Upper lobe of right lung (tissue), 1 donor: ENCODE measurements at regions of chr7 and their contacts with region 1.

Region 1: DNA sequence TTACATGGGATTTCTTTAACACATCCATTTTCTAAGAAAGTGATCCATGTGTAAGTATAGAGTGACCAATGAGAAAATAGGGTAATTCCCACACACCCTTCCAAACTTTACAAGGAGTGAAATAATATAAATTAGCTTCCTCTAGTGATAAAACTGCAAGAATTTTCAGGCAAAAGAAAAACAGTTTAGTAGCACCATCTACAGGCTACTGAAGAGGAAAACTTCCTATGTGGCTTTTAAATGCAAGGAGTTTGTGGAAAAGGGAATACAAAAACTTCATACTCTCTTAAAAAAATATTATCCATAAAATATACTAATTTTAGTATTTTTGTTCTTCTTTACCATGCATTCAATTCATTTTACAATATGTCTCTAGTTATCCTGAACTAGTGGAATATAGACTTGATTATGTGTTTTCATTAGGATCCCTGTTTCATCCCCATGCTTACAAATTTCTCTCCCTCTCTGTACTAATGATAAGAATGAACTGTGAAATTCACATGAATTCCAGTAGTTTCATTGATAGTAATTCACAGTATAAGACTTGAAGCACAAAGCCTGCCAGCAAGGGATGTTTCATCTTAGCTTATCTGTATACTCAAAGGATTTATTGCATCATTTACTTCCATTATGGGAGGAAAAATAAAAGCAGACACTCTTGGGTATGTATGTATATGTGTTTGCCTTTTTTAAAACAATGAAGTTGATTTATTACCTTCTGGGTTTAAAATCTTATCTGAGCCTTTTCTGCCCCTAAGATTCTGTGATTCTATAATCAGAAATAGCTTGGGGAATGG is 442.9 kb downstream of the AUTS2 start:
- DNase-seq: no peak
- ATAC-seq: no peak
- H3K4me3 ChIP-seq: no peak overlapping the region
- H3K27ac ChIP-seq: no peak overlapping the region
- H3K4me1 ChIP-seq: no peaks in the 10 kb centered on the region
- H3K27me3 ChIP-seq: no peaks in the 10 kb centered on the region
- CTCF ChIP-seq: peak; percentile 52

Region 2: DNA sequence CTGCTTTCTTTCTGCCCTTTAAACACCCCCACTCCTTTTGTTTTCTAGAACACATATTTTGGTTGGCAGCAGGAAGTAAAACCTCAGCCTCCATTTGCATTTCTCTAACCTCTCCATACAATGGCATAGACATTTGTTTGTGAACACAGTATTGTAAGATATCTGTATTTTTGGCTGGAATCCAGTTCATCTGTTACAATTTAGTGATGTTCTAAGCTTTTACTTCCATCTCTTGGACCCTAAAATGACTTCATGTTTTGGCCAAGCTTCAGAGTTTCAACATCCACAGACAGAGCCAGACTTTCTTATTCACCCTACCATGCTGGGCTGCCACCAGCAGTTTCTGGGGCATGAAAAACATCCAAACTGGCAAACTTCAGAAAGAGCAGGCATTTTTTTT is 463.9 kb before region 1 on chr7:
- intact Hi-C with region 1: no loop called
- DNase-seq: no peak
- ATAC-seq: no peak
- H3K4me3 ChIP-seq: no peak overlapping the region
- H3K27ac ChIP-seq: no peak overlapping the region
- H3K4me1 ChIP-seq: no peaks in the 10 kb centered on the region
- H3K27me3 ChIP-seq: no peaks in the 10 kb centered on the region
- CTCF ChIP-seq: no peak

Region 3: GRCh38 chr7:69864822-69865221 is 176.3 kb before region 1 on chr7:
- intact Hi-C with region 1: no loop called
- DNase-seq: no peak
- ATAC-seq: no peak
- H3K4me3 ChIP-seq: no peak overlapping the region
- H3K27ac ChIP-seq: no peak overlapping the region
- H3K4me1 ChIP-seq: no peaks in the 10 kb centered on the region
- H3K27me3 ChIP-seq: no peaks in the 10 kb centered on the region
- CTCF ChIP-seq: no peak

Region 4: GRCh38 chr7:69889338-69889975 is 151.7 kb before region 1 on chr7:
- intact Hi-C with region 1: no loop called
- DNase-seq: no peak
- ATAC-seq: no peak
- H3K4me3 ChIP-seq: no peak overlapping the region
- H3K27ac ChIP-seq: no peak overlapping the region
- H3K4me1 ChIP-seq: no peaks in the 10 kb centered on the region
- H3K27me3 ChIP-seq: no peaks in the 10 kb centered on the region
- CTCF ChIP-seq: no peak

Region 5: GRCh38 chr7:70693686-70694360 is 652.7 kb after region 1 on chr7:
- intact Hi-C with region 1: loop called (anchors 10 kb)
- DNase-seq: peak; percentile 91
- ATAC-seq: peak; percentile 91
- H3K4me3 ChIP-seq: peak overlapping the region; percentile 81
- H3K27ac ChIP-seq: peak overlapping the region; percentile 60
- H3K4me1 ChIP-seq: peaks cover 11% of the 10 kb centered on the region
- H3K27me3 ChIP-seq: no peaks in the 10 kb centered on the region
- CTCF ChIP-seq: peak; percentile 32